Naive thymus-derived CD8-positive, alpha-beta T cell (primary cell): ENCODE measurements at regions of chr1 and their contacts with region 1.

Region 1: DNA sequence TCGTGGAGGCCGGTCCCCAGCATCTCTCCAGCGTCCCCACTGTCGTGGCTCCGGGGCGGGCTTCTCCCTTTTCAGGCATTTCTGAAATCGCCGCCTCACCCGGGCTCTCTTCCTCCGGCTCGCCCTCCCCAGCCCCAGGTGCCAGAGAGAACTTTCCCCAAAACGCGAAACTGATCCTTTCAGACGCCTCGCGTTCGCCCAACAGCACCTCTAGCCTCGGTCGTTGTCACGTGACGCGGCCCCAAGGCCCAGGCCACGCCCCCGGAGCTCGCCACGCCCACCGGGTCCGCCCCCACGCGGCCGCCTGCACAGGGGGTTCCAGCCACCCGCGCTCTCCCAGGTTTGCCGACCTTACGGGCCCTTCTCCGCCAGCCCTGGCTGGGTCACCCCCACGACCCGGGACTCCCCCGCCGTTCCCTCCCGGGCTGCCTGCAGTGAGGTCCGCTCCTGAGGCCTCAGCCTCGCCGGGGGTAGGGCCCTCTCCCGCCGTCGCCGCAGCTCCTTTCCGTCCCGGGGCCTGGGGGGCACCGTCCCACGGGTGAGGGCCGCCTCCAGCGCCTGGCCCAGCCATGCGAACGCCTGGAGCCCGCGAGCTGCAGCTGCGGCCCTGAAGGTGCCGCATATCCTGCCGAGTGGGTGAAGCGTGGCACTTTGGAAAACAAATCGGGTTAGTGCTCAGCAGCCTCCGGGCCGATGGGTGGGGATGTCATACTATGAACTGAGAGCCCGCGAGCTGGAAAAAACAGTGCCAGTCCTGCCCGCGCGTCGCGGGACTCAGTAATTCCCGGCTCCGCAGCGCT is 21.0 kb downstream of the H3-3A start:
- DNase-seq: peak; percentile 84 to 96 (median 91)
- ATAC-seq: peak; percentile 94
- H3K4me3 Mint-ChIP-seq: peak overlapping the region; percentile 87 to 97 (median 92)
- H3K27ac Mint-ChIP-seq: peak overlapping the region in 8 of 10 donors; percentile 59 to 92 (median 84)
- H3K4me1 Mint-ChIP-seq: peaks cover 5 to 18% (median 11%) of the 10 kb centered on the region in 4 donors
- H3K27me3 Mint-ChIP-seq: peaks cover 0 to 3% (median 0%) of the 10 kb centered on the region in 5 donors

Region 2: GRCh38 chr1:226109829-226110248 is 26.3 kb after region 1 on chr1:
- POLR2A ChIA-PET with region 1: interaction called, 13 read pairs
- DNase-seq: peak; percentile 41 to 86 (median 74)
- ATAC-seq: peak; percentile 81 to 82
- H3K4me3 Mint-ChIP-seq: peak overlapping the region; percentile 87 to 96 (median 92)
- H3K27ac Mint-ChIP-seq: peak overlapping the region; percentile 79 to 96 (median 90)
- H3K4me1 Mint-ChIP-seq: peaks cover 15 to 34% (median 25%) of the 10 kb centered on the region in 4 donors
- H3K27me3 Mint-ChIP-seq: no peaks in the 10 kb centered on the region